CD4-positive, alpha-beta memory T cell (primary cell): ENCODE measurements at regions of chr4 and their contacts with region 1.

Region 1: GRCh38 chr4:183261953-183262775 is 57.9 kb downstream of the CLDN22 start:
- DNase-seq: peak; percentile 63 to 69 (median 66)
- H3K4me3 ChIP-seq: no peak overlapping the region
- H3K4me3 Mint-ChIP-seq: peak overlapping the region in 1 of 8 donors; percentile 33
- H3K27ac ChIP-seq: no peak overlapping the region
- H3K27ac Mint-ChIP-seq: peak overlapping the region; percentile 54 to 91 (median 85)
- H3K4me1 ChIP-seq: peaks cover 5% of the 10 kb centered on the region
- H3K4me1 Mint-ChIP-seq: peaks cover 5 to 8% (median 7%) of the 10 kb centered on the region in 4 donors
- H3K27me3 ChIP-seq: no peaks in the 10 kb centered on the region
- H3K27me3 Mint-ChIP-seq: no peaks in the 10 kb centered on the region

Region 2: DNA sequence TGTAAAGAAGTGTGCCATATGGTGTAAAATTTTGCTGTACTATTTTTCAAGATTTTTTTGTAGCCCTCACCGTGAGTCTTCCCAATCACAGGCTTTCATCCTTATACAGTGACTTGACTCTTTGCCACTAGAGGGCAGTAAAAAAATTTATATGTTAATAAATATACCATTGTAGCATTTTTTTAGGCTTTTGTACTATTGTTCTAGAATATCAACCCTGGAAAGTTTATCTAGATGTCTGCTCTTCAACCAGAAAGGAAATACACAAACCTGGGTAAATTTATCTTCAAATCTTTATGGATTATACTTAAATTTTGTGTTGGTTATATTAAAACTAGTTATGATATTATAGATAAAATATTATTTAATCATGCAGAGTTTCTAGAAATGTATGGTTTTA is 783.7 kb before region 1 on chr4:
- CTCF ChIA-PET with region 1: no interaction called
- POLR2A ChIA-PET with region 1: no interaction called
- intact Hi-C with region 1: loop called (anchors 2 kb)
- DNase-seq: peak in 4 of 5 donors; percentile 14 to 32 (median 21)
- H3K4me3 ChIP-seq: no peak overlapping the region
- H3K4me3 Mint-ChIP-seq: no peak overlapping the region
- H3K27ac ChIP-seq: no peak overlapping the region
- H3K27ac Mint-ChIP-seq: no peak overlapping the region
- H3K4me1 ChIP-seq: no peaks in the 10 kb centered on the region
- H3K4me1 Mint-ChIP-seq: no peaks in the 10 kb centered on the region
- H3K27me3 ChIP-seq: no peaks in the 10 kb centered on the region
- H3K27me3 Mint-ChIP-seq: peaks cover 3 to 6% of the 10 kb centered on the region in 2 donors

Region 3: GRCh38 chr4:183074296-183074990 is 187.7 kb before region 1 on chr4:
- CTCF ChIA-PET with region 1: interaction called, 142 read pairs
- POLR2A ChIA-PET with region 1: no interaction called
- intact Hi-C with region 1: loop called (anchors 1 kb)
- DNase-seq: no peak
- H3K4me3 ChIP-seq: no peak overlapping the region
- H3K4me3 Mint-ChIP-seq: no peak overlapping the region
- H3K27ac ChIP-seq: no peak overlapping the region
- H3K27ac Mint-ChIP-seq: no peak overlapping the region
- H3K4me1 ChIP-seq: no peaks in the 10 kb centered on the region
- H3K4me1 Mint-ChIP-seq: peaks cover 0 to 2% (median under 1%) of the 10 kb centered on the region in 4 donors
- H3K27me3 ChIP-seq: no peaks in the 10 kb centered on the region
- H3K27me3 Mint-ChIP-seq: peaks cover 2 to 5% of the 10 kb centered on the region in 2 donors

Region 4: DNA sequence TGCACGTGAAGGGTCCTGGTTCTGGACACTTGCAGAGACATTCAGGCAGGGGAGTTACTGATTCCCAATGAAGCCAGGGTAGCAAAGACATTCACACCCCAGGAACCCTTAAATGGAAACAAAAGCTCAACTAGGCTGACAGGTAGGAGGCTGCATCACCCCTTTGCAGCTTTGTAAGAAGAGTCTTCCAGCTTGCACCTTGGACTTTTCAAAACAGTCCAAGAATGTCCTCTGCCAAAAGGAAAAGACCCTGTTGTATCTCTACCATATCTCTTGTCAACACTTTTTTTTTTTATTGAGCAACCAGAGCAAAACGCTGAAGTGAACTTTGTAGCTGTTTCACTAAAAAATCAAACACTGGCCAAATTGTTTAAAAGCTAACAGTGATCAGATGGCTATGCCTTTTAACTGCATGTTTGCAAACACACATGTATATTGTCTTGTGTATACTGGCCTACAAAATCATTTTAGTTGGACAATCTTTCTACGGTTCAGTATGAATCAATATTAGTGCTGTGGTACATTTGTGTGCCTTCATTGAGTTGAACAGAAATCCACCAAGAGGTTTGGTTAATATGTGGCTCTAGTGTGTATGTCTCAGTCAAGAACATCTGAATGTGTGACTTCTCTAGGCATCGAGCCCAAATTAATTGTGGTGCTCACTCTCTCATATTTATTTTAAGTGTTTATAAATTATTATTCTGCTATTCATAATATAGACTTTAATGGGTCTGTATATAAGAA is 181.6 kb before region 1 on chr4:
- CTCF ChIA-PET with region 1: interaction called, 142 read pairs
- POLR2A ChIA-PET with region 1: no interaction called
- intact Hi-C with region 1: no loop called
- DNase-seq: no peak
- H3K4me3 ChIP-seq: no peak overlapping the region
- H3K4me3 Mint-ChIP-seq: no peak overlapping the region
- H3K27ac ChIP-seq: no peak overlapping the region
- H3K27ac Mint-ChIP-seq: no peak overlapping the region
- H3K4me1 ChIP-seq: no peaks in the 10 kb centered on the region
- H3K4me1 Mint-ChIP-seq: no peaks in the 10 kb centered on the region
- H3K27me3 ChIP-seq: no peaks in the 10 kb centered on the region
- H3K27me3 Mint-ChIP-seq: peaks cover 0 to 1% of the 10 kb centered on the region in 2 donors

Region 5: DNA sequence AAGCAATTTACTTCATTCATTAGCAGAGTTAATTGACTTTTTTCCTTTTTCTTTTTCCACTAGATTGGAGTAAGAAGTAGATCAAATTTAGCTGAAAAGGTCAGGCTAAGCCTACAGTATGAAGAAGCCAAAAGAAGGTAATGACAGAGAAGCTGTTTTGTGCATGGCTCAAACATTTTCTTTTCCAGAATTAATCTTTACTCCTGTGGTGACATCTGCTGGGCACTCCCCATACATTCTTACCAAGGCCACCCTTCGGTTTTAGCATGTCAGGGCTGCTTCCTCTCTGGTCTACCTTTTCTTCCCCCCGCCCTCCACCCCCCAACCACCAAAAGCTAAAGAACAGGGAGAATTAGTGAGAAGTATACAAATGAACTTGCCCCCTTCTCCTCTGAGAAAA is 12.3 kb before region 1 on chr4:
- CTCF ChIA-PET with region 1: interaction called, 44 read pairs
- POLR2A ChIA-PET with region 1: no interaction called
- intact Hi-C with region 1: no loop called
- DNase-seq: peak in 4 of 5 donors; percentile 3 to 14 (median 6)
- H3K4me3 ChIP-seq: no peak overlapping the region
- H3K4me3 Mint-ChIP-seq: no peak overlapping the region
- H3K27ac ChIP-seq: no peak overlapping the region
- H3K27ac Mint-ChIP-seq: no peak overlapping the region
- H3K4me1 ChIP-seq: no peaks in the 10 kb centered on the region
- H3K4me1 Mint-ChIP-seq: no peaks in the 10 kb centered on the region
- H3K27me3 ChIP-seq: no peaks in the 10 kb centered on the region
- H3K27me3 Mint-ChIP-seq: no peaks in the 10 kb centered on the region

Region 6: DNA sequence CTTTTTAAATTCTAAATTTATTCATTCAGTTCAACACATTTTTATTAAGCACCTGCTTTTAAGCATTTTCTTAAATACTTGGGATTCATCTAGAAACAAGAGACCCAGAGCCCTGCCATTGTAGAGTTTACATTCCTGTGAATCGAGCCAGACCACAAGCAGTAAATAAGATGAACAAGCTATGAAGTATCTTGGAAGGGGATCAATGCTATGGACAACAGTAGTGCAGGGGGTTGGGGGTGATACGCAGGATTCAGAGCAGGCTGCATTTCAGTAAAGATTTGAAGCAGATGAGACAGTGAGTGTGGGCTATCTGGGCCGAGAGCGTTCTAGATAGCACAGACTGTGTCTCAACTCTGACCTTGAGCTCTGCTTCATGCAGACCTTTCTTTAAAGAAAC is 22.8 kb after region 1 on chr4:
- CTCF ChIA-PET with region 1: interaction called, 10 read pairs
- POLR2A ChIA-PET with region 1: no interaction called
- intact Hi-C with region 1: no loop called
- DNase-seq: no peak
- H3K4me3 ChIP-seq: no peak overlapping the region
- H3K4me3 Mint-ChIP-seq: no peak overlapping the region
- H3K27ac ChIP-seq: no peak overlapping the region
- H3K27ac Mint-ChIP-seq: no peak overlapping the region
- H3K4me1 ChIP-seq: no peaks in the 10 kb centered on the region
- H3K4me1 Mint-ChIP-seq: no peaks in the 10 kb centered on the region
- H3K27me3 ChIP-seq: no peaks in the 10 kb centered on the region
- H3K27me3 Mint-ChIP-seq: no peaks in the 10 kb centered on the region

Region 7: DNA sequence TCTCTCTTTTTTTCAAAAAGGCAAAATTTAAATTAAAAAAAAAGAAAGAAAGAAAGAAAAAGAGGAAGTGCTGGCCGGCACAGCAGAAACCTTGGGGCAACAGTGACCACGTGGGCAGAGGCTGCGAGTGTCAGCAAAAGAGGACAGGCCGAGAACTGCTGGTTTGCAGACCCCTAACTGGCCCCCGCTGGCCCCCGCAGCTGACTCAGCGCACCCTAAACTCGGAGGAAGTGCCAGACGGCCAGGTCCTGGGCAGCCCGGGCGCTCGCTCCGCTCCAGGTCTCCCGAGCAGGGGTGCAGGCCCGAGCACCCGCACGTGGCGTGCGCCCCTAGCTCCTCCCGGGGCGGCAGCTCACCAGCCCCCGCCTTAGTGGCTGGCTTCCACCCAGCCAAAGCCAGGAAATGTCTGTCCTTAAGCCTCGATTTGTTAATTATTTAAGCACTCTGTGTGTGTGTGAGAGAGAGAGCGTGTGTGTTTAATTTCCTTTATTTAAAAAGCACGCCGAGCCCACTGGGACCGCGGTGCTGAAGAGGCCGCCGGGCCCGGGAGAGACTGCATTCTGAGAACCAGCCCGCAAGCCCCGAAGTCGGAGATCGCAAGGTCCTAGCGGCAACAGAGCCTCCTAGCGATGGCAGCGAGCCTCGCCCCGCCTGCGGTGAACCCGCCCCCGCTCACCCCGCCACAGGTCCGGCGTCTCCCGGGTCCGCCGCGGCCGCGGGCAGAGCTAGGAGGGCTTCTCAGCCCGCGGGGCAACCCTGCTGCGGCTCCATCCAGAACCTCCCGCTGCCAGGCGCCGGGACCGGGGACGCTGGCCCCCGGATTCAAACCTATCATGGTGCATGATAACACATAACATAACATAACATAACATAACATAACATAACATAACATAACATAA is 136.3 kb after region 1 on chr4:
- CTCF ChIA-PET with region 1: no interaction called
- POLR2A ChIA-PET with region 1: no interaction called
- intact Hi-C with region 1: loop called (anchors 2 kb)
- DNase-seq: peak; percentile 49 to 57 (median 52)
- H3K4me3 ChIP-seq: peak overlapping the region; percentile 64 to 76
- H3K4me3 Mint-ChIP-seq: peak overlapping the region; percentile 86 to 97 (median 93)
- H3K27ac ChIP-seq: peak overlapping the region; percentile 25
- H3K27ac Mint-ChIP-seq: peak overlapping the region in 6 of 7 donors; percentile 48 to 93 (median 80)
- H3K4me1 ChIP-seq: peaks cover 5% of the 10 kb centered on the region
- H3K4me1 Mint-ChIP-seq: peaks cover 6 to 23% (median 15%) of the 10 kb centered on the region in 4 donors
- H3K27me3 ChIP-seq: no peaks in the 10 kb centered on the region
- H3K27me3 Mint-ChIP-seq: peaks cover 1 to 7% of the 10 kb centered on the region in 2 donors

Region 8: DNA sequence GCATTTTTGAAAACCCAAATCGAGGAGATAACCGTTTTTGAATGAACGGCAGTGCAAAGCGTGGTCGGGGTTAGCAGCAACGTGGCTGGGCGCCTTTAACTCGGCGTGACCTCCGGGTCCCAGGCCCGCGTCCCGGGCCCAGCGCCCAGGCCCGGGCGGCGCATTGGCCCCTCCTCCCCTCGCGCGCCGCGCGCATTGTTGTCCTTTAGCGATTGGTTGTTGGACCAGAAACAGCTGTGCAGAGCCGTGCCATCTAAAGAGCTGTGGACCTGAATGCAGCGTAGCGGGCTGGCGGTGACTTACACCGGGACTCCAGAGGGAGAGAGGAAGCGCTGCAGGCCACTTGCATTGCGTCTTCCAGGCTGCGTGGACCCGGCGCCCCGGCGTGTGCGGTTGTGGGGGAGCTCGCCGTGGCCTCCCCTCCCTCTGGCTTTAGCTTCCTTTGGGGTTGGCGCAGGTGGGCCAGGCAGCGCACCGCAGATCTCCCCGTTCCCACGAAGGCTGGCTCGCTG is 643.0 kb after region 1 on chr4 and contains the start of gene STOX2:
- CTCF ChIA-PET with region 1: no interaction called
- POLR2A ChIA-PET with region 1: no interaction called
- intact Hi-C with region 1: no loop called
- DNase-seq: no peak
- H3K4me3 ChIP-seq: no peak within 1 kb of the TSS
- H3K4me3 Mint-ChIP-seq: peak within 1 kb of the TSS in 7 of 8 donors; percentile 19 to 78 (median 58)
- H3K27ac ChIP-seq: no peak within 1 kb of the TSS
- H3K27ac Mint-ChIP-seq: peak within 1 kb of the TSS in 1 of 7 donors; percentile 30
- H3K4me1 ChIP-seq: no peaks in the 10 kb centered on the region
- H3K4me1 Mint-ChIP-seq: peaks cover 2 to 7% (median 4%) of the 10 kb centered on the region in 4 donors
- H3K27me3 ChIP-seq: peaks cover 16% of the 10 kb centered on the region
- H3K27me3 Mint-ChIP-seq: peaks cover 34 to 39% of the 10 kb centered on the region in 2 donors
- total RNA-seq, gene STOX2: not detected